A549 (cell line): ENCODE measurements at regions of chr22 and their contacts with region 1.

Region 1: GRCh38 chr22:41697126-41697775 is 2.1 kb upstream of the MEI1 start:
- DNase-seq: peak; percentile 79 to 80
- ATAC-seq: peak; percentile 92 to 95
- H3K4me3 ChIP-seq: no peak overlapping the region
- H3K27ac ChIP-seq: peak overlapping the region; percentile 60 to 82; a peak in 4 of 6 replicates
- H3K4me1 ChIP-seq: peaks cover 7% of the 10 kb centered on the region; the same call in 1 of the 3 replicates
- CTCF ChIP-seq: peak; percentile 89
- EP300 ChIP-seq: no peak
- POLR2A ChIP-seq: no peak
- RAD21 ChIP-seq: peak; percentile 81 to 83

Region 2: GRCh38 chr22:41621099-41621910 is 75.9 kb before region 1 on chr22 and contains the start of gene XRCC6:
- CTCF ChIA-PET with region 1: no interaction called
- POLR2A ChIA-PET with region 1: no interaction called
- DNase-seq: peak; percentile 97 to 99
- ATAC-seq: peak; percentile 90
- H3K4me3 ChIP-seq: peak within 1 kb of the TSS; percentile 93
- H3K27ac ChIP-seq: peak within 1 kb of the TSS; percentile 96 to 99
- H3K4me1 ChIP-seq: peaks cover 27% of the 10 kb centered on the region
- CTCF ChIP-seq: no peak
- EP300 ChIP-seq: no peak
- POLR2A ChIP-seq: peak; percentile 62
- RAD21 ChIP-seq: no peak
- polyA plus RNA-seq, gene XRCC6: 139 and 189 TPM in 2 replicates

Region 3: GRCh38 chr22:41642331-41643110 is 54.7 kb before region 1 on chr22:
- CTCF ChIA-PET with region 1: no interaction called
- POLR2A ChIA-PET with region 1: no interaction called
- DNase-seq: no peak
- ATAC-seq: no peak
- H3K4me3 ChIP-seq: no peak overlapping the region
- H3K27ac ChIP-seq: no peak overlapping the region
- H3K4me1 ChIP-seq: peaks cover 18% of the 10 kb centered on the region
- CTCF ChIP-seq: no peak
- EP300 ChIP-seq: no peak
- POLR2A ChIP-seq: no peak
- RAD21 ChIP-seq: no peak

Region 4: DNA sequence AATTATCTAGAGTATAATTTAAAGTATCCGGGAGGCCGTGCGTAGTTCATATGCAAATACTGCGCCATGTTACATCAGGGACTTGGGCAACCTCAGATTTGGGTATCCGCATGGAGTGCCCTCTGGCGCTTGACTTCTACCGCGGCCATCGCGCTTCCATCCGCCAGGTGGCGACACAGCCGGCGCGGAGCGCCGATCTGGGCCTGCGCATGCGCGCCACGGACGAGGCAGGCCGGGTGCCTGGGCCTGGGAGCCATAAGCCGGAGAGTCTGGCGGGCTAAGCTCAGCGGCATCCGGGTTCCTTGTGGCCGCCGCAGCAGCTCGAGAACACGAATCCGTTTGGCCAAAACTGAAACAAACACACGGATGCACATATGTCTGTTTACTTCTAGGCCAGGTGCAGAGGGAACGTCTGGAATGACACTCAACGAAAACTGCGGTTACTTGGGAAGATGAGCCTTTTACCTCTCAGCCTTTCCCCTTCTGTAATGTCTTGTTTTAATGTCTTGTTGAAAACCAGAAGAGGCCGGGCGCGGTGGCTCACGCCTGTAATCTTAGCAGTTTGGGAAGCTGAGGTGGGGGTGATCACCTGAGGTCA is 30.5 kb before region 1 on chr22:
- CTCF ChIA-PET with region 1: interaction called, 11 read pairs
- POLR2A ChIA-PET with region 1: no interaction called
- DNase-seq: peak; percentile 85 to 92
- ATAC-seq: peak; percentile 87 to 90
- H3K4me3 ChIP-seq: peak overlapping the region; percentile 40
- H3K27ac ChIP-seq: peak overlapping the region; percentile 90 to 97
- H3K4me1 ChIP-seq: peaks cover 41% of the 10 kb centered on the region
- CTCF ChIP-seq: peak; percentile 94
- EP300 ChIP-seq: no peak
- POLR2A ChIP-seq: peak; percentile 41; the same call in 1 of the 2 replicates
- RAD21 ChIP-seq: peak; percentile 57 to 65

Region 5: GRCh38 chr22:41713004-41713403 is 15.8 kb after region 1 on chr22:
- CTCF ChIA-PET with region 1: interaction called, 32 read pairs
- POLR2A ChIA-PET with region 1: no interaction called
- DNase-seq: no peak
- ATAC-seq: 0 out of 6 replicates have a peak, but pooled peaks of 1 of the 2 experiments have one; percentile 22
- H3K4me3 ChIP-seq: no peak overlapping the region
- H3K27ac ChIP-seq: no peak overlapping the region
- H3K4me1 ChIP-seq: no peaks in the 10 kb centered on the region
- CTCF ChIP-seq: no peak
- EP300 ChIP-seq: no peak
- POLR2A ChIP-seq: no peak
- RAD21 ChIP-seq: no peak

Region 6: GRCh38 chr22:41739576-41739975 is 42.3 kb after region 1 on chr22:
- CTCF ChIA-PET with region 1: interaction called, 11 read pairs
- POLR2A ChIA-PET with region 1: no interaction called
- DNase-seq: no peak
- ATAC-seq: no peak
- H3K4me3 ChIP-seq: no peak overlapping the region
- H3K27ac ChIP-seq: no peak overlapping the region
- H3K4me1 ChIP-seq: no peaks in the 10 kb centered on the region
- CTCF ChIP-seq: no peak
- EP300 ChIP-seq: no peak
- POLR2A ChIP-seq: no peak
- RAD21 ChIP-seq: no peak

Region 7: DNA sequence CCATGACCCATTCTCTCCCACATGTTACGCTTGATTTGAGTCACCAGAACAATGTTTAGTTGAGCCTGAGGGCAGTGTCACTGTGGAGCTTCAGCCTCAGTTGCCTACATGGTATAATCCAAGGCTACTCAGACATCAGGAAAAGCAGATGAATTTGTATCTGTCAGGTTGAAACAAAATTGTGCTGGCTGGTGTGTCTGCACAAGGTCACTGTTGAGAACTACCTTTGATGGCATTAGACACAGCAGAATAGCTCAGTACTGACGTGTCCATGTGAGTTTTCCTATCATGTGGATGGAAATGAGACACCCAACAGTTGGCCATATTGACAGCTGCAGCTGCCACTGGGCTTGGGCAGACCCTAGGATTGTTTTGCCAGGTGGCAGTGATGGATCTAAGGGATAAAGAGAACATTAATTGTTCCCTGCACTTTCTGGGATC is 119.0 kb after region 1 on chr22:
- CTCF ChIA-PET with region 1: interaction called, 10 read pairs
- POLR2A ChIA-PET with region 1: no interaction called
- DNase-seq: no peak
- ATAC-seq: no peak
- H3K4me3 ChIP-seq: no peak overlapping the region
- H3K27ac ChIP-seq: no peak overlapping the region
- H3K4me1 ChIP-seq: no peaks in the 10 kb centered on the region
- CTCF ChIP-seq: no peak
- EP300 ChIP-seq: no peak
- POLR2A ChIP-seq: no peak
- RAD21 ChIP-seq: no peak

Region 8: DNA sequence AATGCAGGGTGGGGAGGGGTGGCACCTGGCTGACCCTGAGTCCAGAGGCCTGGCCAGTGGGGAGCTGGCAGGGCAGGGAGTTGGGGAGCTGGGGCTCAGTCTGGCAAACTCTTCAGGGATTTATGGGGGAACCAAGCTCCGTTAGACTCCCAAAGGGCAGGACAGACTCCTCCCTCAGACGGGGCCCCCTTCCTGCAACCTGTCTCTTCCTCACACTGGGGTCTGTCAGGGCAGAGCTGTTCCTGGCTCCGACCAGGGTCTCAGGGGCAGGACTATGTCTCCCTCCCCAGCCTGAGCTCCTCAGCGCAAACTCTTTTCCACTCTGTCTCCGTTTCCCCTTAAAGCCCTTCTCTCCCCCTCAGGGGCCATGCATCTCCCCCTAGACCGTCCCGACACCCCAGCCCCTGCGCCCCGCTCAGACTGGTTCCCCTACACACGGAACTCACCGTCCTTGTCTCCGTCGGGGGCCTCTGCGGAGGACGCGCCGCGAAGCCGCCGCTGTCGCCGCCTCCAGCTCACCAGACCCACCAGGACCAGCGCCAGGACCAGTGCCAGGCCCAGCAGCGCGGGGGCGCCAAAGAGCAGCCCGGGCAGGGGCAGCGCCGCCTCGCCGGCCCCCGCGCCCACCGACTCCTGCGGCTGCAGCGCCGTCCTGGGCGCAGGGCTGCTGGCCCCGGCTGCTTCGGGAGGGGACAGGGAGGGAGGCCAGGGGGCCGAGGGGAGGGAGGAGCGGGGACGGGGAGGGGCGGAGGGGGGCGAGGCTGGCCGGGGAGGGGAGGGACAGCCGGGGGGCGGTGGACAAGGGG is 228.6 kb after region 1 on chr22:
- CTCF ChIA-PET with region 1: interaction called, 13 read pairs
- POLR2A ChIA-PET with region 1: interaction called, 6 read pairs
- DNase-seq: peak in 1 of 2 experiments; percentile 48
- ATAC-seq: peak; percentile 76 to 81
- H3K4me3 ChIP-seq: peak overlapping the region; percentile 64
- H3K27ac ChIP-seq: peak overlapping the region; percentile 74 to 90
- H3K4me1 ChIP-seq: no peaks in the 10 kb centered on the region
- CTCF ChIP-seq: peak; percentile 71
- EP300 ChIP-seq: no peak
- POLR2A ChIP-seq: no peak
- RAD21 ChIP-seq: no peak; a peak in 1 of 5 replicates

Region 9: DNA sequence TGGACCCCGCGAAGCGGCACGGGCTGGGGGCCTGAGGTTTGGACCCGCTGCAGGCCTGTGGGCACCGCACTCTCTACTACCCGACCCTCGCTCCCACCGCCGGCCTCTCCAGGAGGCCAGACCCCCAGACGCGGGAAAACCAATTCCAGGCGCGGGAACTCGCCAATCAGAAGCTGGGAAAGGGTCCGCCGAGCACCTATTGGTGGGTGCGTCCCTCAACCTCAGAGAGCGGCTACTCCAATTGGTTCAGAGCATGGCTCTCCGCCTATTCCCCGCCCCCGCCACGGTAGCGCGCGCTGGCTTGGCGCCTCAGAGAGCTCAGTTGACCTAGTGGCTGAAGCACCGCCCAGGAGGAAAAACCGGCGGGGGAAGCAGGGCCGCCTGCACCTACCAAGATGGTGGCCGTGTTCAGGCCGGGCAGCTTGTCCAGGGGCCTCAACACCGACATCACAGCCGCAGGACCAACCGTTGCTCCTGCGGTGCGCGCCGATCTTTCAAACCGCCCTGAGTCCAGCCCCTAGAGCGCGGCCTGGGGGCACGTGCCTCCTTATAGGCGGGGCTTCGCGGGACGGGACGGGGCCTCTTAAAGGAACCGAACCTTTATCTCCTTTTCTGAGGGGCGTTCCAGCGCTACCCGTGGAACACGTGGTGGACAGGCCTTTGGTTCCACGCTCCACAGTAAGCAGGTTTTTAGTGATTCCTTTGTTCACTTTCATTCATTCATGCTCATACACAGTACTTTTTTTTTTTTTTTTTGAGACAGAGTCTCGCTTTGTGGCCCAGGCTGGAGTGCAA is 249.6 kb after region 1 on chr22 and contains the start of gene CENPM:
- CTCF ChIA-PET with region 1: interaction called, 81 read pairs
- POLR2A ChIA-PET with region 1: interaction called, 4 read pairs
- DNase-seq: peak; percentile 75 to 95
- ATAC-seq: peak; percentile 97 to 98
- H3K4me3 ChIP-seq: peak within 1 kb of the TSS; percentile 92
- H3K27ac ChIP-seq: peak within 1 kb of the TSS; percentile 90 to 95
- H3K4me1 ChIP-seq: peaks cover 12% of the 10 kb centered on the region; the same call in 2 of the 3 replicates
- CTCF ChIP-seq: no peak
- EP300 ChIP-seq: no peak
- POLR2A ChIP-seq: peak; percentile 26; the same call in 1 of the 2 replicates
- RAD21 ChIP-seq: no peak
- polyA plus RNA-seq, gene CENPM: 22.3 and 23.9 TPM in 2 replicates

Region 10: GRCh38 chr22:42022162-42022835 is 325.0 kb after region 1 on chr22:
- CTCF ChIA-PET with region 1: no interaction called
- POLR2A ChIA-PET with region 1: no interaction called
- DNase-seq: peak in 1 of 2 experiments; percentile 16
- ATAC-seq: no peak
- H3K4me3 ChIP-seq: no peak overlapping the region
- H3K27ac ChIP-seq: no peak overlapping the region
- H3K4me1 ChIP-seq: no peaks in the 10 kb centered on the region
- CTCF ChIP-seq: no peak
- EP300 ChIP-seq: no peak
- POLR2A ChIP-seq: no peak
- RAD21 ChIP-seq: no peak